RWPE1 (cell line): ENCODE measurements at regions of chr16 and their contacts with region 1.

Region 1: DNA sequence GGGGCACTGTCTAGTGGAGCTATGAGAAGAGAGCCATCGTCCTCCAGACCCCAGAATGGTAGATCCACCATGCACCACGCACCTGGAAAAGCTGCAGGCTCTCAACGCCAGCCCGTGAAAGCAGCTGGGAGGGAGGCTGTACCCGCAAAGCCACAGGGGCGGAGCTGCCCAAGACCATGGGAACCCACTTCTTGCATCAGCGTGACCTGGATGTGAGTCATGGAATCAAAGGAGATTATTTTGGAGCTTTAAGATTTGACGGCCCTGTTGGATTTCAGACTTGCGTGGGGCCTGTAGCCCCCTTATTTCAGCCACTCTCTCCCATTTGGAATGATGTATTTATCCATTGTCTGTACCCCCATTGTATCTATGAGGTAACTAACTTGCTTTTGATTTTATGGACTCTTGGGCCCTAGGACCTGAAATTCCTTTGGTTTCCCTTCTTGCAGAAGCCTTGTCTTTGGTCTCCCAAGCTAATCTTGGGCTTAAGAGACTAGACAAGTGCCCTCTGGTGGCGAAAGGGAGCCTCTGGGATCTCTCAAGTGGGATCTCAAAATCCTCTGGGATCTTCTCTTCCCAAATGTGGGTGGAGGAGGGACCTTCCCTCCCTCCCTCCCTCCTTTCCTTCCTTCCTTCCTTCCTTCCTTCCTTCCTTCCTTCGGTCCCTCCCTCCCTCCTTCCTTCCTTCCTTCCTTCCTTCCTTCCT is 58.2 kb upstream of the HAPSTR1 start:
- DNase-seq: peak; percentile 64
- H3K27ac ChIP-seq: no peak overlapping the region
- CTCF ChIP-seq: peak; percentile 20; the same call in 1 of the 2 replicates

Region 2: GRCh38 chr16:8868416-8869211 is 164.7 kb before region 1 on chr16 and contains the start of gene CARHSP1:
- CTCF ChIA-PET with region 1: no interaction called
- POLR2A ChIA-PET with region 1: no interaction called
- DNase-seq: peak; percentile 98
- H3K27ac ChIP-seq: peak within 1 kb of the TSS; percentile 92
- CTCF ChIP-seq: no peak

Region 3: DNA sequence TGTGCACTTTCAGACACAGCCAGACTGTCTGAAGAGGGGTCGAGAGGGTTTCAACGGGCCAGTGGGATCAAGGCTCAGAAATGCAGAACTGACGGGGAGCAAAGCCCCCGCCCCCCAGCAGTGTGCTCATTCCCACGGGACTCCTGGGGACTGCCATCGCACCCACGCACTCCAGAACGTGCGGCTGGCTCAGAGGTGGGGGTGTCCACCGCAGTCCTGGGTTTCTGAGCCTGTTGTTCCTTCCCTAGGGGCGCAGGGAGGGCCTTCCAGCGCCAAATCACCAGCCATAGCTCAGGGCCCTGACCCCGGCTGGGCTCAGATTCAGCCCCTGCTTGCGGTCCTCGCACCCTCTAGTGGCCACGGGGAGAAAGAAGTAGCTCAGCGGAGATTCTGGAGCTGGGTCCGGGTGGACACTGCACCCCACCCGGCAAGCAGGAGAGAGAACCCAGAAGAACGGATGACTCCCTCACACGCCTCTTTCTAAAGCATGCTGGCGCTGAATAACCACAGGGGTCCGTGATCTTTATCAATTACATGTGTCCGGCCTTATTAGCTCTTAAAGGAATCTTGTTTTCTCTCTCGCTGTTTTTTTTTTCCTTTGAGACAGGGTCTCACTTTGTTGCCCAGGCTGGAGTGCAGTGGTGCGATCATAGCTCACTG is 24.5 kb before region 1 on chr16:
- CTCF ChIA-PET with region 1: interaction called, 10 read pairs
- POLR2A ChIA-PET with region 1: no interaction called
- DNase-seq: peak; percentile 77
- H3K27ac ChIP-seq: no peak overlapping the region
- CTCF ChIP-seq: peak; percentile 83